Heart left ventricle (tissue), 16 donors: ENCODE measurements at regions of chr6 and their contacts with region 1.

Region 1: GRCh38 chr6:75368151-75368779 is 83.7 kb upstream of the TMEM30A start:
- DNase-seq: peak in 3 of 5 donors; percentile 42 to 48 (median 44)
- ATAC-seq: peak; percentile 70 to 85 (median 76)
- H3K4me3 ChIP-seq: no peak overlapping the region
- H3K27ac ChIP-seq: peak overlapping the region; percentile 0 to 68 (median 48)
- H3K4me1 ChIP-seq: peaks cover 0 to 47% (median 22%) of the 10 kb centered on the region in 12 donors
- H3K27me3 ChIP-seq: no peaks in the 10 kb centered on the region
- CTCF ChIP-seq: peak; percentile 26 to 73 (median 59)
- POLR2A ChIP-seq: no peak

Region 2: GRCh38 chr6:75296811-75297779 is 71.2 kb before region 1 on chr6:
- intact Hi-C with region 1: loop called in 1 of 10 experiments (anchors 5 kb)
- DNase-seq: no peak
- ATAC-seq: peak in 3 of 4 donors; percentile 34 to 46 (median 36)
- H3K4me3 ChIP-seq: no peak overlapping the region
- H3K27ac ChIP-seq: no peak overlapping the region
- H3K4me1 ChIP-seq: peaks cover 0 to 31% (median 21%) of the 10 kb centered on the region in 12 donors
- H3K27me3 ChIP-seq: no peaks in the 10 kb centered on the region
- CTCF ChIP-seq: peak; percentile 65 to 87 (median 78)
- POLR2A ChIP-seq: no peak

Region 3: DNA sequence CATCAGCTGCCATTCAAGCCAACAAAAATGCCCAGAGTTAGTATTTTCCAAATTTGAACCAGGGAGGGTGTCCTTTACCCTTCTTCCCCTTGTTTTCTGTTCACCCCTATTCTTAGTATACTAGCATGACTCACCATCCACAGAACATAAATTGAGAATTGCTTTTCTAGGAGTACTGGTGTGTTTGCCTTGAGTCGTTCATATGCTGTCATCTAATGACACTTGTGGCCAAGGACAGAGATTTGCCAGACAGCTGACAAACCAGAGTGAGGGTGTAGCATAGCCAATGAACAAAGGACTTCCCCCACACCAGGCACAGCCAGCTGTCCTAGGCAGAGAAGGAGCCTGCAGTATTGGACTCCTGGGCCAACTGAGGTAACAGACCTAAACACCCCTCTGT is 63.1 kb after region 1 on chr6:
- intact Hi-C with region 1: loop called in 2 of 10 experiments (anchors 1 to 10 kb)
- DNase-seq: peak in 4 of 5 donors; percentile 47 to 78 (median 68)
- ATAC-seq: peak; percentile 91 to 98 (median 96)
- H3K4me3 ChIP-seq: no peak overlapping the region
- H3K27ac ChIP-seq: peak overlapping the region; percentile 23 to 80 (median 66)
- H3K4me1 ChIP-seq: peaks cover 6 to 79% (median 52%) of the 10 kb centered on the region in 12 donors
- H3K27me3 ChIP-seq: no peaks in the 10 kb centered on the region
- CTCF ChIP-seq: no peak
- POLR2A ChIP-seq: no peak

Region 4: DNA sequence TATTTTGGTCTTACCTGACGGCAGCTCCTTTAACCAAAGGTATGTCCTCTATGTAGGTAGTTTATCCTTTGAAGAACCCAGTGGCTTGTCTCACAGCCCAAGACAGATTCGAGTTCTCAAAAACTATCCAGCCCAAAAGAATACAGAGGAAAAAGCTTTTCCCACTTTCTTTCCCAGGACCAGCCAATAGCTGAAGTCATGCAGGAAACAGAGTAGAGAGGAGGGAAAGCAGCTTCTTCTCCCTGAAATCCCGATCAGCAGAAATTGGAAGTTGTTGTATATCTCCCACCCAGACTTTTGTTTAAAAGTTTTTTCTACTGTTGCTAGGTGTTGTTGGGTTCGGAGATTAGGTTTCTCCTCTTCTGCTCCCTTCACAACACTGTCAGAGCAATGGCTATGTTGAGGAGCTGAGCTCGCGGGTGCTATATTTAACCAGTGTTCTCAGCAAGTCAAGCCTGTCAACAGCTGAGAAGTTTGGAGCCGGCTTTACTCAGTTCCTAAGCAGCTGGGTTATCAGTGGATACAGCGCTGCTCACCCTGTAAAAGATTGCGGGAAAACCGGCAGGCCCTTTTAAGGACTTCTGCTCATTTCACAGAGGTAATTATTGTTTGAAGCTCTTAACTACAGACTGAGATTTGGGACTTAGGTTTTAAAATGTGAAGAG is 125.3 kb after region 1 on chr6 and contains the start of gene FILIP1:
- intact Hi-C with region 1: loop called in 8 of 10 experiments (anchors 2 to 5 kb)
- DNase-seq: peak; percentile 62 to 85 (median 83)
- ATAC-seq: peak; percentile 88 to 95 (median 88)
- H3K4me3 ChIP-seq: peak within 1 kb of the TSS; percentile 10 to 68 (median 60)
- H3K27ac ChIP-seq: peak within 1 kb of the TSS; percentile 79 to 95 (median 92)
- H3K4me1 ChIP-seq: peaks cover 0 to 50% (median 28%) of the 10 kb centered on the region in 12 donors
- H3K27me3 ChIP-seq: no peaks in the 10 kb centered on the region
- CTCF ChIP-seq: no peak
- POLR2A ChIP-seq: peak; percentile 66 to 85
- total RNA-seq, gene FILIP1: 91.1 to 230 (median 177) TPM

Region 5: DNA sequence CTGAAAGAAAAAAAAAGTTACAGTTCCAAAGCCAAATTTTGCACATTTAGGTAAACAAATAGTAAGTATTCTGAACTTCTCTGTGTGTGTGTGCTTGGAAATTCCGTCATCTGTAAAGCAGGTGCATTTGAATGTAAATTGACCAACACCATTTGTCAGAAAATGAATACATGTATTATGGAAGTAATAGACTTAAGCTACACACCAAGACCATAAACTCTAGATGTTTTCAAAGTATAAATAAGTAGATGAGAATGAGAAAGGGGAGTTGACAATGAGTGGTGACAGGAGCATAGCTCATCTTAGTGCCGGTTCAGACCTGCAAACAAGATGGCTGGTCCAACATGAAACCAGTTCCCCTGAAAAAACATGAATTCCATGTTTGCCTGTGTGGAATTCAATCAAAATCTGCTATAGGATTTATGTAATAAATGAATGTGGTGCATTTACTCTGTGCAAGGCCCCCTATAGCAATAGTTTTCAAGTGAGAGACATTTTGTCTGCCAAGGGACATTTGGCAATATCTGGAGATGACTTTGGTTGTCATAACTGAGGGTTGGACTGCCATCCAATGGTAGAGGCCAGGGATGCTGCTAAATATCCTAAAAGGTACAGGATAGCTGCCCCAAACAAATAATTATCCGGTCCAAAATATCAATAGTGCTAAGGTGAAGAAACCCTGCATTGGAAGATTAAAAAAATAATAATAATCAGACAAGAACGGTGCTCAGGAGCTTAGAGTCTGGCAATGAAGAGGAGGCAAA is 136.4 kb after region 1 on chr6:
- intact Hi-C with region 1: loop called in 1 of 10 experiments (anchors 5 kb)
- DNase-seq: no peak
- ATAC-seq: peak; percentile 53 to 91 (median 88)
- H3K4me3 ChIP-seq: no peak overlapping the region
- H3K27ac ChIP-seq: no peak overlapping the region
- H3K4me1 ChIP-seq: peaks cover 0 to 23% (median 4%) of the 10 kb centered on the region in 12 donors
- H3K27me3 ChIP-seq: no peaks in the 10 kb centered on the region
- CTCF ChIP-seq: peak; percentile 29 to 70 (median 58)
- POLR2A ChIP-seq: no peak

Region 6: DNA sequence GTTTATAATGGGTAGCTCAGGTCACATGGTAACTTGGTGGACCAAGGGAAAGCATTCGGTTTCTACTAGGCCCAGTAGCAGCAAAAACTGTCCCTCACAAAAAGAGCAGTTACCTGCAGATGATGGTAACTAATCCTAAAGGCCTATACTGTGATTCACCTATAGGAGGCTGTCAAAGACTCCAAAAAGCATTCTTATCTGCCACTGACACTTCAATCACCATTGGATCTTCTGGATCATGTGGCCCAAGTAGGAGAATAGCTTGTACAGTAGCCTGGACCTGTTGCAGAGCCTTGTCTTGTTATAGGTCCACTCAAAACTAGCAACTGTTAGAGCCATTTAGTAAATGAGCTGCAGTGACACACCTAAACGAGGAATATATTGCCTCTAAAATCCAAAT is 148.5 kb after region 1 on chr6:
- intact Hi-C with region 1: loop called in 1 of 10 experiments (anchors 10 kb)
- DNase-seq: no peak
- ATAC-seq: no peak
- H3K4me3 ChIP-seq: no peak overlapping the region
- H3K27ac ChIP-seq: no peak overlapping the region
- H3K4me1 ChIP-seq: no peaks in the 10 kb centered on the region
- H3K27me3 ChIP-seq: no peaks in the 10 kb centered on the region
- CTCF ChIP-seq: no peak
- POLR2A ChIP-seq: no peak

Region 7: DNA sequence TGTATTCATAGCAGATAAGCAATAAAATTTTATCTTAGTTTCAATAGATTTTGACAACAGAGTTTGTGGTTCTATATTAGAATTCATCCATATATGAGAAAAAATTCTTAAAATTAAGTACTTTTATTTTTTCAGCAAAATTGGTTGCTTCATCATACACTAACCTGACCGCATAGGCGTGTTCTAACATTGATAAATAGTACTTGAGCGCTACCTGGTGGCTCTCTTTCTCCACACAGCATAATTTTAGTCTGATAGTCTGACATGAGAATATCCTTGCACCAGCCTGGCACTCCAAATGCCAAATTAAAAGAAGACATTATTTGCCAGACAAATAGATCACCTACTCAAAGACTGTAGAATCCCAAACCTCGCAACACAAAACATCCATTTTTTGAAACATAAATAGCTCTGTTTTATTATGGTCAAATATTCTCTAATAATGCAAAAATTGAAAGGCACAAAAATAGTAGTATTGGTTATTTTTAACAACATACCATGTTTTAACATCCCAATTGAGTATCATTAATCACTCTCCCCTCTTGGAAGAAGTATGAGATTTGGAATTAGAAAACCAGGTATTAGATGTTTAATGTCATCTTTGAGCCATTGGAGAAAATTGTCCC is 158.3 kb after region 1 on chr6:
- intact Hi-C with region 1: loop called in 1 of 10 experiments (anchors 2 kb)
- DNase-seq: peak in 3 of 5 donors; percentile 45 to 62 (median 51)
- ATAC-seq: peak; percentile 49 to 92 (median 88)
- H3K4me3 ChIP-seq: no peak overlapping the region
- H3K27ac ChIP-seq: no peak overlapping the region
- H3K4me1 ChIP-seq: peaks cover 0 to 9% (median 0%) of the 10 kb centered on the region in 12 donors
- H3K27me3 ChIP-seq: no peaks in the 10 kb centered on the region
- CTCF ChIP-seq: peak; percentile 55 to 81 (median 76)
- POLR2A ChIP-seq: no peak